Endothelial cell of umbilical vein (primary cell): ENCODE measurements at regions of chr18 and their contacts with region 1.

Region 1: DNA sequence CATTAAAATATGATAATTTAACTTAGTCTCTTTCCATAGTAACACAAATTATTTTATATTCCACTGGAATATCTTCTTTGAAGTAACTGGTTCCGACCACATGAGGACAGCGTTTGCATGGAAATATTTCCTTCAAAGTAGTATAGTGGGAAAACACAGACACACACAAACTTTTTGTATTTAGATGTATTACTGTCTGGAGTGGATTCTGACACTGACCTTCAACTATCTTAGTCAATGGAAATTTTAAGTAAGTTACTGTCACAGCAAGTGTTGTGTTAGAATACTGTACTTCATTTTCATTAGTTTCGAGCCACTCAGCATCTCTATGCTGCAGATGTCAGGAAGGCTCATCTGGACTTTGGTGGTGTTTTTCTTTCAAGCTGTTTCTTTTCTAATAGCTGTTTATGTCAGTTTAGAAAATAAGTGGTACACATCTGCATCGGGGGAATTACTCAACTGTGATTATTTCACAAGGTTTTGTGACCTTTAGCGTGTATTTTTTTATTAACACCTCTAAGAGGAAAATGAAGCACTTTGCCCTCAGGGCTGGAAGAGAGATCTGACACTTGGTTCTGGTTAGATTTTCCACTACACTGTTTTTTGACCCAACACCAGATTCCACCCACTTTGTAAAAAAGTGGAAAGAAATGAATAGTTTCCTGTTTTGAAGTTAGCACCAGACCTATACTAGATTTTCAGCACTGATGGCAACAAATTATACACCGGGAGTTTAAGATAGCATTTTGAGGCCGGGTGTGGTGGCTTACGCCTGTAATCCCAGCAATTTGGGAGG is 18.9 kb upstream of the THOC1 start:
- DNase-seq: peak; percentile 67
- H3K4me3 ChIP-seq: no peak overlapping the region
- H3K27ac ChIP-seq: no peak overlapping the region
- H3K4me1 ChIP-seq: no peaks in the 10 kb centered on the region
- H3K27me3 ChIP-seq: peaks cover 0 to 3% of the 10 kb centered on the region in 2 experiments
- CTCF ChIP-seq: peak; percentile 38 to 39
- POLR2A ChIP-seq: no peak

Region 2: DNA sequence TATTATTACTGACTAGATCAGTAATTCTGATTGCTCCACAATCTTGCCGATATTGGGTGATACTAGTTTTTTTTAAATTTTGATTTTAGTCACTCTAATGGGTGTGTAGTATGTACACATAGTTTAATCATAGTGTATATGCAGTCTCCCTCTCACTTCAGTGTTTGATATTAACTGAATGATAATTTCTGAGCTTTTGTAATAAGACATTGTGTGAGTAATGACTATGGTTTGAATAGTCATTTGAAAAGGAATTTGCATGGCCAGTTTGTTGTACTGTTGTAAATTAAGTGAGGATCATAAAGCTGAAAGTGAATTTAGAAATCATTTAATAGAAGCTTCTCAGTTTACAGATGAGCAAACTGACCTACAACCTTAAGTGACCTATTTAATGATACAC is 95.0 kb before region 1 on chr18:
- CTCF ChIA-PET with region 1: no interaction called
- POLR2A ChIA-PET with region 1: no interaction called
- dilution Hi-C with region 1: no loop called
- intact Hi-C with region 1: no loop called
- DNase-seq: no peak
- H3K4me3 ChIP-seq: no peak overlapping the region
- H3K27ac ChIP-seq: no peak overlapping the region
- H3K4me1 ChIP-seq: no peaks in the 10 kb centered on the region
- H3K27me3 ChIP-seq: no peaks in the 10 kb centered on the region
- CTCF ChIP-seq: no peak
- POLR2A ChIP-seq: no peak

Region 3: GRCh38 chr18:212780-213179 is 73.9 kb before region 1 on chr18:
- CTCF ChIA-PET with region 1: no interaction called
- POLR2A ChIA-PET with region 1: no interaction called
- dilution Hi-C with region 1: no loop called
- intact Hi-C with region 1: no loop called
- DNase-seq: no peak
- H3K4me3 ChIP-seq: no peak overlapping the region
- H3K27ac ChIP-seq: no peak overlapping the region
- H3K4me1 ChIP-seq: peaks cover 9% of the 10 kb centered on the region
- H3K27me3 ChIP-seq: no peaks in the 10 kb centered on the region
- CTCF ChIP-seq: no peak
- POLR2A ChIP-seq: no peak

Region 4: DNA sequence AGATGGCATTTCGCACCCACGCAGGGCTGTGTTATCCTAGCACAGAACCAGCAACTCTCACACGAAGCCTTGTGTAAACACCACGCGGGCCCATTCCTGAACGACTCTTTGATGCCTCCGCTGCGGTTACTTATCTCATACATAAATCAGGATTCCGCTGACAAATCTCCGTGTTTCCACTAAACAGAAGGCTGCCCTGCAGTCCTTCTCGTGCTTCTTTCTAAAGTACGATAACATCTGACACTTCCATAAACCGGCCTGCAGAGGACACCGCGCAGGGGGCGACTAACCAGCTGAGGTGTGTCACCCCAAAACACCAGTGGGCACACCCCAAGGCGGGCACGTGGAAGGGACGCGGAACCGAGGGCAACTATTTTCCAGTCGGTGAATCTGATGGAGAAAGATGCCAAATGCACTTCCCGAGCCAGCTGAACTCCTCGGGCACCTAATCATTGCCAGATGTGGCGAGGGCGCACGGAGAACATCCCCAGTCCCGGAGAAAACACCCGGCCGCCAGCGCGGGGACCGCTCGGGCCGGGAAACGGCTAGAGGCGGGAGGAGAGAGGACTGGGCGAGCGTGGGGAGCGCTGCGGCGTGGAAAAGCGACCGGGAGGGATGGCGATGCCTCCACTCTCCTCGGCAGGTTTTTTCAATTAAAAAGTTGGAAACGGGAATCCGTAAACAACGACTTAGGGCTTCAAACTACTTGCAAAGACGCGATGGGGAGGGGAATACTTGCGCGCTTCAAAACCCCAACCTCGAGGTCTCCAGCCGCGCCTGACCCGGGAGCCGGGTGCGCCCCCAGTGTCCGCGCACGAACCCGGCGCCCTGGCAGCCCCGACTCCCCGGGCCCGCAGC is 213.1 kb after region 1 on chr18:
- CTCF ChIA-PET with region 1: no interaction called
- POLR2A ChIA-PET with region 1: no interaction called
- dilution Hi-C with region 1: no loop called
- intact Hi-C with region 1: loop called (anchors 5 kb)
- DNase-seq: peak; percentile 57
- H3K4me3 ChIP-seq: peak overlapping the region; percentile 5 to 58 (median 38)
- H3K27ac ChIP-seq: no peak overlapping the region
- H3K4me1 ChIP-seq: peaks cover 13% of the 10 kb centered on the region
- H3K27me3 ChIP-seq: peaks cover 3 to 15% of the 10 kb centered on the region in 2 experiments
- CTCF ChIP-seq: peak in 1 of 2 donors; percentile 13
- POLR2A ChIP-seq: no peak